ENCODE measurements at regions of chr21 and their contacts with region 1.

Region 1: DNA sequence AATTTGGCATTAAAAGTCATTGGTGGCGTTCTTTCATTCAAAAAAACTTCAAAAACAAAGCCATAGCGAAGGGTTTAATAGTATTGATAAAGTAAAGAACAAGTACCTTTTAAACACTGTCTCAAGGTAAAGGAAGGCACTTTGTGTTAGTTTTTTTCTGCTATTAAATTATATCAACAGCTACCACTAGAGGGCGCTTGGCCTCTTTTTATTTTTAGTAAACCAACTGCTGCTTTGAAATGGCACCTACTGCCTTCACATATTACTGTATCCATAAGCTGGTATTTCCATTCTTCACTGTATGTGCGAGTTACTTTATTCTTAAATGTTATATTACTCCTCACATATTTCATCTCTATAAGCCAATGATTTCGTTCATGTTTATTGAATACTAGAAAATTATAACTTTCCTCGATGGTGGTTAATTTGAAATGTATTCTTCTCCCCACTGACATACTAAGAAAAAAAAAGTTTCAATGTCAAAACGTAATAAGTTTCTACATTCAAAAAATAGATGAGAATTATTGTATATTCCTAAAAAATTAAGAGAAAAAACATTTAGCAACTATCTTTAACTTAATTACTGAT is 125.7 kb upstream of the CXADR start:
- DNase-seq: peak; percentile 16
- H3K4me3 ChIP-seq: no peak overlapping the region
- H3K27ac ChIP-seq: no peak overlapping the region
- H3K27me3 ChIP-seq: peaks cover 2% of the 10 kb centered on the region
- CTCF ChIP-seq: peak; percentile 66

Region 2: DNA sequence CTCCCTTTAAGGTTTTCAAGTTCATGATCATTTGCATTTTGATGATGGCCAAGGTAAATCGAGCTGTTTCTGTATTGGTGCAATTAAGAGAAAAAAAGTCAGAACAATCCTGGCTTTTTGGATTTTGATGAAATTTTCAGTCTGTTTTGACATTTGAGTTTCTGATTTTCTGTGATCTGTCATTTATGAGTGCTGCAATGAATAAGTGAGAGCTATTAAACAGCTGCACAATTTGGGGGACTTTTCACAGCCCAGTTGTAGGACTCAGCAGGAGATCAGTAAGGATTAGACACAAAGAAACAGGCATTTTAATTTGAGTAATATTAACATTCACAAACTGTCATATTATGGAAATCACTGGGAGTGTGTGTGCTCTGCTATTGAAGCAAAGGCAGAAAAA is 327.2 kb before region 1 on chr21:
- CTCF ChIA-PET with region 1: no interaction called
- POLR2A ChIA-PET with region 1: no interaction called
- DNase-seq: no peak
- H3K4me3 ChIP-seq: no peak overlapping the region
- H3K27ac ChIP-seq: no peak overlapping the region
- H3K27me3 ChIP-seq: no peaks in the 10 kb centered on the region
- CTCF ChIP-seq: no peak

Region 3: DNA sequence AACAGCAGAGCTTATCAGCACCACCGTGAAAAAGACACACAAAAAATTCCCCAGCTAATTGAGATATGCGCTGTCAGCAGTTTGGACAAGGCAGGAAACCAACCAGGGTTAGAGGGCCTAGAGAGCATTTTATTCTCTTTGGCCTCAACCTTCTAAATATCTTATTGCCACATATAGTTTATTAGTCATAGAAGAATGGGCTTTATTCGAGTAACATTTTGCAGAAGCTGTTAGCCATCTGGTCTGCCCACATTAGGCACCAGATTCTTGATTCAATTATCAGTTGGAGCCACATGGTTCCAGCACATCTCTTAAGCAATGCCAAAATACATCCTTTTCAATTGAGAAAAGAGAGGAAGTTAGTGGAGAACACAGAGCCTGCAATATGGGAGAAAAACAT is 15.8 kb after region 1 on chr21:
- CTCF ChIA-PET with region 1: interaction called, 12 read pairs
- POLR2A ChIA-PET with region 1: no interaction called
- DNase-seq: no peak
- H3K4me3 ChIP-seq: no peak overlapping the region
- H3K27ac ChIP-seq: no peak overlapping the region
- H3K27me3 ChIP-seq: no peaks in the 10 kb centered on the region
- CTCF ChIP-seq: no peak

Region 4: DNA sequence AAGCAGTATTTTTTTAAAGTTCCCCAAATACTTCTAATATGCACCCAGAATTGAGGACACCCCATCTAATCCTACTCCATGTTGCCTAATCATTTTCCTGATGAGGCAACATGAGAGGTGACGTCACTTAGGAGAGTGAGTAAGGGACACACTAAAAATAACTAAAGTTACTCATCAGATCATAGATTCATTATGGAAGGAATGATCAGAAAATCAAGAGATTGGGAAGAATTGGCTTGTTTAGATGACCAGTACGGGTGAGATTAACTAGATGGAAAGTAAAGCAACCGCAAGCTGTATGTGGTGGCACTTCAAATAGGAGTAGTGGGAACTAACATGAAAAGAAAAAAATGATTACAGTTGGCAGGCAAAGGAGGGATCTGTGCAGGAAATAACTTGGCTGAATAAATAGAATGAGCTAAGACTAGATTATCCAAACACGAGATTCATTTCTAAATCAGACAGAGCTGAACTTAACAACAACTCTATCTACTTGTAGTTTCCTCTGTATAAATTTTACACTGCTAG is 64.3 kb after region 1 on chr21:
- CTCF ChIA-PET with region 1: interaction called, 17 read pairs
- POLR2A ChIA-PET with region 1: no interaction called
- DNase-seq: peak; percentile 50
- H3K4me3 ChIP-seq: no peak overlapping the region
- H3K27ac ChIP-seq: peak overlapping the region; percentile 43
- H3K27me3 ChIP-seq: no peaks in the 10 kb centered on the region
- CTCF ChIP-seq: no peak

Region 5: GRCh38 chr21:17554679-17555465 is 167.7 kb after region 1 on chr21:
- CTCF ChIA-PET with region 1: interaction called, 156 read pairs
- POLR2A ChIA-PET with region 1: no interaction called
- DNase-seq: no peak
- H3K4me3 ChIP-seq: no peak overlapping the region
- H3K27ac ChIP-seq: no peak overlapping the region
- H3K27me3 ChIP-seq: peaks cover 2% of the 10 kb centered on the region
- CTCF ChIP-seq: peak; percentile 46

Region 6: DNA sequence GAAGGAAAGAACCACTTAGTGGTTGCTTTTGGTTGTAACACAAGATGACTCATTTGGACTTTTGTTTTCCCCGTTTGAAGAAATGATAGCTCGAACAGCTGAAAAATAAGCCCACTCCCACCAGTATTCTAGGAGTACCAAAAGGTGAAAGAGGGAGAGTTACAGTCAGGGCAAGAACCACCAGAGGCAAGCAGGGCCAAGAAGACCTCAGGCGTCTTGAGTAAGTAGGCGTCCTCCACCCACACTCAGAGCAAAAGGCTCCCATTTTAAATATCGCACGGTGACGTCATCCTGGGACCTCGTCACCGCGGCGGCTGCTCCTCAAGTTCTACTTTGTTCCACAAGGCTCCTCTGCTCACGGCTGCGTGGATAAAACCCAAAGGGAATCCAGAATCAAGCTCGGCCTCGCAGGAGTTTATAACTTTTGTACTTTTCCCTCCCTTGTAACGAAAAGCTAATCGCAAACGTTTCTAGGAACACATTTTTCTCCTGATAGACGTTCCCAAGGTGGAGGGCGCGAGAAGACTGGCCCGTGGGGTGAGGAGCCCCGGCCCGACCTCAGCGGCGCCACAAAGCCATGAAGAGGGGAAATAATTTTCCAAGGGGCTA is 224.4 kb after region 1 on chr21:
- CTCF ChIA-PET with region 1: interaction called, 27 read pairs
- POLR2A ChIA-PET with region 1: no interaction called
- DNase-seq: peak; percentile 77
- H3K4me3 ChIP-seq: peak overlapping the region; percentile 63
- H3K27ac ChIP-seq: peak overlapping the region; percentile 86
- H3K27me3 ChIP-seq: no peaks in the 10 kb centered on the region
- CTCF ChIP-seq: no peak